Activated CD4-positive, alpha-beta T cell treated with anti-CD3 and anti-CD28 coated beads for 36 hours (primary cell): ENCODE measurements at regions of chr22 and their contacts with region 1.

Region 1: GRCh38 chr22:40346178-40347118 is at the start of gene ADSL:
- DNase-seq: peak; percentile 94
- ATAC-seq: peak; percentile 87
- H3K4me3 Mint-ChIP-seq: peak within 1 kb of the TSS; percentile 86
- H3K27ac Mint-ChIP-seq: peak within 1 kb of the TSS; percentile 92
- H3K4me1 Mint-ChIP-seq: peaks cover 45% of the 10 kb centered on the region
- H3K27me3 Mint-ChIP-seq: no peaks in the 10 kb centered on the region
- total RNA-seq, gene ADSL: 125 to 172 TPM

Region 2: DNA sequence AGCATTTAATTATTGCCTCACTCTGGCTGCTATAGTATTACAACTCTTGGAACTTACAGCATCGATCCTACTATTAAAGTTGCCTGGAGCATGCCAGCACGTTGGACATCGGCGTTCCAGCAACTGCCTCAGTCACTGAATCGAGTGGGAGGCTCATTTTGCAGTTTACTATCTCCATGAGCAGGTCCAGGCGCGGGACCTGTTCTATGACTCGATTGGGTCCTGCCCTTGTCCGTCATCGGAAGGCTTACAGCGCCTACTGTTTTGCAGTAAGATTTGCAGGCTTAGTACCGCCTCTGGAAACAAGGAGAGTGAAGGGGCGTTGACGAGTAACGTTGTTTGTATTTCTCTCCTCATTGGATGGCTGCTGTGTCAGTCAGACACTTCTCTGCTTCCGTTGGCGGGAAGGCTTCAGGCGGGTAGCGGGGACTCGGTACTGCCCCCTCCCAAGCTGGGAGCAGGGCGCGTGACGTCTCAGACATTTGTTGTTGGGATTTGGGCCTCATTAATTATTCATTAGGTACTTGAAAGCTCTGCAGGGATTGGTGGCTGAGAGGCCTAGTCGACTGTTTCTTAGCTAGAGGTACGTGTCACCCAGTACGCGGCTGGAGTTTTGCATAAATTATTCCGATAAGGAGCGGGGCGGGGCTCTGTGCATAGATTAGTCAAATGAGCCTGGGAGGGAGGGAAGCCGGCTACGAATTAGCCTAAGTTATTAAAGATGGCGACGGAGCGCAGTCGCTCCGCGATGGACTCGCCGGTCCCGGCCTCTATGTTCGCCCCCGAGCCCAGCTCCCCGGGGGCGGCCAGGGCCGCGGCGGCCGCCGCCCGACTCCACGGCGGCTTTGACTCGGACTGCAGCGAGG is 1641.0 kb before region 1 on chr22 and contains the start of gene GTPBP1:
- CTCF ChIA-PET with region 1: no interaction called
- POLR2A ChIA-PET with region 1: no interaction called
- intact Hi-C with region 1: loop called in 1 of 2 experiments (anchors 5 kb)
- DNase-seq: peak; percentile 98
- ATAC-seq: peak; percentile 89
- H3K4me3 Mint-ChIP-seq: peak within 1 kb of the TSS; percentile 93
- H3K27ac Mint-ChIP-seq: peak within 1 kb of the TSS; percentile 97
- H3K4me1 Mint-ChIP-seq: peaks cover 53% of the 10 kb centered on the region
- H3K27me3 Mint-ChIP-seq: no peaks in the 10 kb centered on the region
- total RNA-seq, gene GTPBP1: 88.6 to 92.8 TPM

Region 3: DNA sequence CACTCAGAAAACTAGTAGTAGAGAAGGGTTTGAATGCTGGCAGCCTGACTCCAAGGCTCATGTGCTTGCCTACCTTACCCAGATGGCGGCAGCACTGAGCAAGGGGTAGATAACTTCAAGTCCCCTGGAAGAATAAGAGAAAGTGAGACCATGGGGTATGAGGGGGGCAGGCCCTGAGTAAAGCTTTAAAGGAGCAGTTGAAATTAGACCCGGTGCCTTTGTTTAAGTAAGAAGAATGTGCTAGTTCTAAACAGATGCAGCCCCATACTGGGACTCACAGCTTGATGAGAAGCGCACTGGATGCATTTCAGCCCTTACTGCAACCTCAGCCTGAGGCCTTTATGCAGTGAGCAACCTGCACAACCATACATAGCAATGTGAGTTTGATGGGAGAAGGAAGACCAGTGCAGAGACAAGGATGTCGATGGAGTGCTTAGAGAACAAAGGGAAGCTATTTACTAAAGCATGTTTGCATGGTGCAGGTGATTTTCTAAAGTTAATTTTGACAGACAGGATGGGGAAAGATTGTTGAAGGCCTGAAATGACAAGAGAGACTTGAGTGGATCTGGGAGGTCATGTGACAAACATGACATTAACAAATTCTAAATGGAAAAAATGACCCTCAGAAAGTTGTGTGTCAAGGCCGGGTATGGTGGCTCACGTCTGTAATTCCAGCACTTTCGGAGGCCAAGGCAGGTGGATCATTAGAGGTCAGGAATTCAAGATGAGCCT is 413.4 kb before region 1 on chr22:
- CTCF ChIA-PET with region 1: no interaction called
- POLR2A ChIA-PET with region 1: no interaction called
- intact Hi-C with region 1: loop called in 1 of 2 experiments (anchors 5 kb)
- DNase-seq: peak; percentile 83
- ATAC-seq: peak; percentile 35
- H3K4me3 Mint-ChIP-seq: peak overlapping the region; percentile 69
- H3K27ac Mint-ChIP-seq: peak overlapping the region; percentile 92
- H3K4me1 Mint-ChIP-seq: peaks cover 54% of the 10 kb centered on the region
- H3K27me3 Mint-ChIP-seq: no peaks in the 10 kb centered on the region

Region 4: GRCh38 chr22:40055143-40055883 is 291.1 kb before region 1 on chr22:
- CTCF ChIA-PET with region 1: interaction called, 21 read pairs
- POLR2A ChIA-PET with region 1: interaction called, 3 read pairs
- intact Hi-C with region 1: loop called in 1 of 2 experiments (anchors 2 kb)
- DNase-seq: peak; percentile 43
- ATAC-seq: peak; percentile 89
- H3K4me3 Mint-ChIP-seq: peak overlapping the region; percentile 73
- H3K27ac Mint-ChIP-seq: peak overlapping the region; percentile 100
- H3K4me1 Mint-ChIP-seq: peaks cover 79% of the 10 kb centered on the region
- H3K27me3 Mint-ChIP-seq: no peaks in the 10 kb centered on the region

Region 5: DNA sequence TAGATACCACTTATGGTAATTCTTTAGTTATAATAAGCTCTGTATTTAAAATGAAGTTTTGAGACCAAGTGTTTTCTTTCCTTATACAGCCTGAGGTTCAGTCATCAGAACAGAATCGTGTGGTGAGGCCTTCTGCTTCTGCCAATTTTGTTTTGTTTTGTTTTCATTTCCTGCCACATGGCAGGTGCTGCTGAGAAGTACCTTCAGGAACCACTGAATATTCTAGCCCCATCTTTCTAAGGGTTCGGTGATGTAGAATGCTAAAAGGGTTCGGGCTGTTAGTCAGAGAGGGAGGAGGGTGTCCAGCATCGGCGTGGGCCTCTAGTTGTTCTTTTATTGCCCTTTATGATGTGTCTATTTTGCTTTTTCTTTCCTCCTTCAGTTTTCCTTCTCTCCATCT is 142.9 kb before region 1 on chr22:
- CTCF ChIA-PET with region 1: interaction called, 6 read pairs
- POLR2A ChIA-PET with region 1: no interaction called
- intact Hi-C with region 1: loop called in 1 of 2 experiments (anchors 2 kb)
- DNase-seq: peak; percentile 55
- ATAC-seq: peak; percentile 88
- H3K4me3 Mint-ChIP-seq: peak overlapping the region; percentile 63
- H3K27ac Mint-ChIP-seq: peak overlapping the region; percentile 94
- H3K4me1 Mint-ChIP-seq: peaks cover 66% of the 10 kb centered on the region
- H3K27me3 Mint-ChIP-seq: no peaks in the 10 kb centered on the region

Region 6: GRCh38 chr22:40276996-40277823 is 69.2 kb before region 1 on chr22:
- CTCF ChIA-PET with region 1: interaction called, 3 read pairs
- POLR2A ChIA-PET with region 1: no interaction called
- intact Hi-C with region 1: loop called in 1 of 2 experiments (anchors 1 kb)
- DNase-seq: no peak
- ATAC-seq: peak; percentile 31
- H3K4me3 Mint-ChIP-seq: no peak overlapping the region
- H3K27ac Mint-ChIP-seq: peak overlapping the region; percentile 68
- H3K4me1 Mint-ChIP-seq: peaks cover 47% of the 10 kb centered on the region
- H3K27me3 Mint-ChIP-seq: no peaks in the 10 kb centered on the region

Region 7: GRCh38 chr22:40368016-40368415 is 21.6 kb after region 1 on chr22:
- CTCF ChIA-PET with region 1: interaction called, 6 read pairs
- POLR2A ChIA-PET with region 1: interaction called, 4 read pairs
- intact Hi-C with region 1: loop called in 1 of 2 experiments (anchors 1 kb)
- DNase-seq: no peak
- ATAC-seq: no peak
- H3K4me3 Mint-ChIP-seq: no peak overlapping the region
- H3K27ac Mint-ChIP-seq: no peak overlapping the region
- H3K4me1 Mint-ChIP-seq: peaks cover 19% of the 10 kb centered on the region
- H3K27me3 Mint-ChIP-seq: no peaks in the 10 kb centered on the region